A673 (cell line): ENCODE measurements at regions of chr3 and their contacts with region 1.

Region 1: DNA sequence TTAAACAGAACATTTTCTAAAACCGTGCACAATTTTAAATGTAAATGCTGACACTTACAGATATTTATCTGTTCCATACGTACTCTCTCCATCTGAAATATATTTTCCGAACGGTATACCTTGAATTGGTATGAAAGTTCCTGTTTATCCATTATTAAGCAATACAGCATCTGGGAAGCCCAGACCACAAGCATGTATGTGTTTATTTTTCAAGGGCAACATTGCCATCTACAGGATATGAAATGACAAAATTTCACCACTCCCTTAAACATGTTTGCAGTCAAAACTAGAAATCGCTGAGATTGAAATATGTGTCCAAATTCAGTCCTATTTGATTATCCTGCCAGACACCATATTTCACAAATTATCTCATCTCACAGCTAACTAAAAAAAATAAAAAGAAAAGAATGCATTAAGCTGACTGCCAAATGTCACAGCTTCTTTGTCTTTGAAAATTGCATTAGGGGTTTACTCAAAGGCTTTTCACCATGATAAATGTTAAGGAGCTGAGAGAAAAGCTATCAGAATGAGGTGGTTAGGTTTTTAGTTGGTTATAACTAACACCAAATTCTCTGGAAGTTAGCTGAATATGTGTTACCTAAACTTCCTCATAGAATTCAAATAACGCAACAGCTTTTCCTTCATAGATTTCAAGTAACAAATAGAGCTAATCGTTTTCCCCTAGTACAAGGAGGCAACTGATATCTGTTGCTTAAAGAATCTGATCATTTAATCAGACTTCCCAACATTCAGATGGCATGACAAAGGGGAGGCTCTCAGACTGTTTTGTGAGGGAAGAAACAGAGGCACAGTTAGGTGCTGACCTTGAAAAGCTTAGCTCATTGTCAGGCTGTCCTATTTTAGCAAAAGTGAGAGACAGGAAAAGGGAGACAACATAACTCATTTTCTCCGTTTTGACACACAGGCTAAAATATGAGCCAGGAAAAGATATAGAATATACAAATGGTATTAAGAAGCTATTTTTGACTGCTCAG is 533.1 kb downstream of the TBL1XR1 start:
- DNase-seq: peak; percentile 79
- H3K4me3 ChIP-seq: no peak overlapping the region
- H3K27ac ChIP-seq: peak overlapping the region; percentile 35
- H3K4me1 ChIP-seq: peaks cover 17% of the 10 kb centered on the region
- H3K27me3 ChIP-seq: no peaks in the 10 kb centered on the region
- CTCF ChIP-seq: peak; percentile 67

Region 2: DNA sequence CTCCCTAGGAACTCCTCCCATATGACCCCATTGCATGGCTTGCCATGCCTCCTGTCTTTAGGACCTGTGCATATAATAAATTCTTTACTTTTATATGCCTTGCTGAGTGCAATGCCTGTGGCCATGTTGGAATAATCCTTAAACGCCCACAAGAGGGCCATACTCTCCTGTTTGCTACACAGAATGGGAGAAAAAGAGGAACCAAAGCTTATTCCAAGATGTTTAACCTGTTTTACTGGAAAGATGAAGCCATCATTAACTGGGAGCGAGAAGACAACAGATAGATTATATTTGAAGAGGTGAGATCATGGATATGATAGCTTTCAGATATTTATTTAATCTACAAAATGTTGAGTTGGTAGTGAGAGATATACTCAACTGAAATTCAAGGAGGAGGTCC is 707.1 kb before region 1 on chr3:
- CTCF ChIA-PET with region 1: no interaction called
- POLR2A ChIA-PET with region 1: no interaction called
- intact Hi-C with region 1: loop called (anchors 5 kb)
- DNase-seq: peak; percentile 16
- H3K4me3 ChIP-seq: no peak overlapping the region
- H3K27ac ChIP-seq: no peak overlapping the region
- H3K4me1 ChIP-seq: no peaks in the 10 kb centered on the region
- H3K27me3 ChIP-seq: no peaks in the 10 kb centered on the region
- CTCF ChIP-seq: peak; percentile 45; the same call in 1 of the 2 replicates

Region 3: GRCh38 chr3:176439729-176440128 is 224.4 kb before region 1 on chr3:
- CTCF ChIA-PET with region 1: no interaction called
- POLR2A ChIA-PET with region 1: no interaction called
- intact Hi-C with region 1: loop called (anchors 5 kb)
- DNase-seq: no peak
- H3K4me3 ChIP-seq: no peak overlapping the region
- H3K27ac ChIP-seq: no peak overlapping the region
- H3K4me1 ChIP-seq: no peaks in the 10 kb centered on the region
- H3K27me3 ChIP-seq: no peaks in the 10 kb centered on the region
- CTCF ChIP-seq: no peak

Region 4: DNA sequence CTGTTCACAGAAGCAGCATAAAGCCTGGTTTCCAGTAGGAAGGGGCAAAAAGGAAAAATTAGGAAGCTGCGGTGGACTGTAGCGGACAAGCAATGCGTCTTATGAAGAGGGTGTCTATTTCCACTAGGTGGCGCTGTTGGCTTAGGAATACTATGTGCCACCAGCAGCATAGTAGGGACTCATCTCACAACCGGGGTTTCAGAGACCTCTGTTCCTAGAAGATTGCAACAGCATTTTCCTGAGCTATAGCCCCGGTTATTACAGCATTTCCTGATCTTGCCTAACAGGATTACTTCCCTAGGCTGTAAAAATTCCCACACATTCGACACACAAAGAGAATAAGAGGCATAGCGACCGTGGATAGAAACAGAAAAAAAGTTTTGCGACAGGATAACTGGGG is 149.8 kb before region 1 on chr3:
- CTCF ChIA-PET with region 1: interaction called, 3 read pairs
- POLR2A ChIA-PET with region 1: no interaction called
- intact Hi-C with region 1: loop called (anchors 5 kb)
- DNase-seq: peak; percentile 68
- H3K4me3 ChIP-seq: no peak overlapping the region
- H3K27ac ChIP-seq: no peak overlapping the region
- H3K4me1 ChIP-seq: no peaks in the 10 kb centered on the region
- H3K27me3 ChIP-seq: no peaks in the 10 kb centered on the region
- CTCF ChIP-seq: peak; percentile 54

Region 5: GRCh38 chr3:176755552-176755951 is 91.4 kb after region 1 on chr3:
- CTCF ChIA-PET with region 1: no interaction called
- POLR2A ChIA-PET with region 1: no interaction called
- intact Hi-C with region 1: no loop called
- DNase-seq: no peak
- H3K4me3 ChIP-seq: no peak overlapping the region
- H3K27ac ChIP-seq: no peak overlapping the region
- H3K4me1 ChIP-seq: no peaks in the 10 kb centered on the region
- H3K27me3 ChIP-seq: no peaks in the 10 kb centered on the region
- CTCF ChIP-seq: no peak

Region 6: DNA sequence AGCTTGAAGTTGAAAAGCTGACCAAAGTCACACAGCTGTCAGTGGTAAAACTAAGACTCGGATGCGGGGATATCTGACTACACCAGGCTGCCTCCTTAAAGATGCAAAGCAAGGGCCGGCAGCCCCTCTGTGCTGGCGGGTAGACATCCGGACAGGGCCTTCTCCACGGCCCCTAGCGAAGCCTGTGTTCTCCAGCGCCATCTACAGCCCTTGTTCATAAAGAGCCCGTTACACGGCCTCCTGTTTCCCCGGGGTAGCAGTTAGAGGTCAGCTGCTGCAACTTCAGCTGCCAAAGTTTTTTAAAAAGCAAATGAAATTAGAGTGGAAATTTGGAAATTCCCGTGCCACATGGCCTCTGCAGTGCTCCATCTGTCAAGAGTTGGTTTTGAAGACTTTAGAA is 150.2 kb after region 1 on chr3:
- CTCF ChIA-PET with region 1: no interaction called
- POLR2A ChIA-PET with region 1: no interaction called
- intact Hi-C with region 1: loop called (anchors 5 kb)
- DNase-seq: peak; percentile 77
- H3K4me3 ChIP-seq: no peak overlapping the region
- H3K27ac ChIP-seq: no peak overlapping the region
- H3K4me1 ChIP-seq: peaks cover 11% of the 10 kb centered on the region
- H3K27me3 ChIP-seq: no peaks in the 10 kb centered on the region
- CTCF ChIP-seq: peak; percentile 78

Region 7: DNA sequence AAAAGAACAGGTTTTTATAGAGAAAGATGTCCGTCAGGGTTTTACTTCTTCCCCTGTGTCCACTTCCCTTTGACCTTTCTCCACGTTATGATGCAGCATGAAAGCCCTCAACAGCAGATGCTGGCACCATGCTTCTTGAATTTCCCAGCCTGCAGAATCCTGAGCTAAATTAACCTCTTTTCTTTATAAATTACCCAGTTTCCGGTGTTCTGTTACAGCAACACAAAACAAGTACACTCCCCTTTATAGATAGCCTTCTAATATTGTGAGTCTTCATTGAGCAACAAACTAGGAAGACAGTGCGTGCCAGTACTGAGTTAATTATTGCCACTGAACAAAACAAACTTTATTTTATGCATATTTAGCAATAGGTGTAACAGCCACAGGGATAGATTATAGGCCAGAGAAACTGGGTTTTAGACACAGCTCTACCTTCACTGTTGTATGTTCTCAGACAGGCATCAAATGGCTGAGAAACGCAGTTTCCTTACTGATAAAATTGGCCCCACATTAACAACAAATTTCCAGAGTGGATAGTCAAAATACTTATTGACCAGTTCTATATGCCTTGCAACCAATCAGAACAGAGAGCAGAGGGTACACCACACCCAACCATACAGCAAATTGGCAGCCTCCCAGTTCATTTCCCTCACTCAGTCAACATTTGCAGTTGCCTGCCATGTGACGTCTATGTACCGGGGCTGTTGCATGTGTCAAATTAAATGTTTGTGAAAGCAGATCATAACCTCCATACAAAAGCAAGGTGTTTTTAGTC is 547.6 kb after region 1 on chr3:
- CTCF ChIA-PET with region 1: no interaction called
- POLR2A ChIA-PET with region 1: no interaction called
- intact Hi-C with region 1: no loop called
- DNase-seq: peak; percentile 88
- H3K4me3 ChIP-seq: no peak overlapping the region
- H3K27ac ChIP-seq: peak overlapping the region; percentile 68
- H3K4me1 ChIP-seq: peaks cover 25% of the 10 kb centered on the region
- H3K27me3 ChIP-seq: no peaks in the 10 kb centered on the region
- CTCF ChIP-seq: no peak

Region 8: GRCh38 chr3:178385280-178385952 is 1721.3 kb after region 1 on chr3:
- CTCF ChIA-PET with region 1: interaction called, 3 read pairs
- POLR2A ChIA-PET with region 1: no interaction called
- intact Hi-C with region 1: loop called (anchors 5 kb)
- DNase-seq: peak; percentile 64
- H3K4me3 ChIP-seq: no peak overlapping the region
- H3K27ac ChIP-seq: no peak overlapping the region
- H3K4me1 ChIP-seq: peaks cover 14% of the 10 kb centered on the region
- H3K27me3 ChIP-seq: no peaks in the 10 kb centered on the region
- CTCF ChIP-seq: peak; percentile 92